ENCODE measurements at regions of chrX and their contacts with region 1.

Region 1: DNA sequence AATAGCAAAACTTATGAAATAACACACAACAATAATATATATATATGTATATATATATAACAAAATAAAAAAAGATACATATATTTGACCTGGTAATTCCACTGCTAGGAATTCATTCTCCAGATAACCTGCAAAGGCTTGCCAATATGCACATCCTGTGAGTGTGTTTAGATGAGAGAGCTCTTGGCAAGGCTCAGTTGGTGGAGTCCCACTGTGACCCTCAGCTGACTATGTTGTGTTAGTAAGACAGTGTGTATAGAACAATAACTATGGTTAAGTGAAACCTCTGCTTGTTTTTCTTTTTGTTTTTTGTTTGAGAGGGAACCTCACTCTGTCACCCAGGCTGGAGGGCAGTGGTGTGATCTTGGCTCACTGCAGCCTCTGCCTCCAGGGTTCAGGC is 39.5 kb upstream of the RBMX start:
- DNase-seq: no peak
- H3K4me3 ChIP-seq: no peak overlapping the region
- H3K27ac ChIP-seq: no peak overlapping the region
- H3K4me1 ChIP-seq: no peaks in the 10 kb centered on the region
- H3K27me3 ChIP-seq: no peaks in the 10 kb centered on the region
- CTCF ChIP-seq: no peak
- EP300 ChIP-seq: no peak
- POLR2A ChIP-seq: no peak

Region 2: DNA sequence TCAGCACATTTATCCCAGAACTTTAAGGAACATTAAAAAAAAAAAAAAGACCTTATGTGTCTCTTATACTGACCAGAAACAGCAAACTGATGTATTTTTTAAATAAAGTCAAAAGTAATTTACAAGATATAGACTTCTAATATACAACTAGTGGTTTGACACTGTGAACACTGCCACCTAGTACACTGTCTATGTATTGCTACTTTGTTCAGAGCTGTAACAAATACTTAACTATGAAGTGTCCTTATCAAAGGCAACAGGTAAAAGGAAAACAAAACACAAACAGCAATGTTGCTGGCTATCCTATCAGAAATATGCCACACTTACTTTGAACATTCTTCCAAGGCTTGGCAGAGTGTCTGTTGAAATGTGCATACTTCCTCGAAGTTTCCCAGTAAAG is 211.7 kb before region 1 on chrX:
- intact Hi-C with region 1: loop called (anchors 5 kb)
- DNase-seq: no peak
- H3K4me3 ChIP-seq: no peak overlapping the region
- H3K27ac ChIP-seq: no peak overlapping the region
- H3K4me1 ChIP-seq: no peaks in the 10 kb centered on the region
- H3K27me3 ChIP-seq: no peaks in the 10 kb centered on the region
- CTCF ChIP-seq: peak in 1 of 3 experiments; percentile 26
- EP300 ChIP-seq: no peak
- POLR2A ChIP-seq: no peak

Region 3: DNA sequence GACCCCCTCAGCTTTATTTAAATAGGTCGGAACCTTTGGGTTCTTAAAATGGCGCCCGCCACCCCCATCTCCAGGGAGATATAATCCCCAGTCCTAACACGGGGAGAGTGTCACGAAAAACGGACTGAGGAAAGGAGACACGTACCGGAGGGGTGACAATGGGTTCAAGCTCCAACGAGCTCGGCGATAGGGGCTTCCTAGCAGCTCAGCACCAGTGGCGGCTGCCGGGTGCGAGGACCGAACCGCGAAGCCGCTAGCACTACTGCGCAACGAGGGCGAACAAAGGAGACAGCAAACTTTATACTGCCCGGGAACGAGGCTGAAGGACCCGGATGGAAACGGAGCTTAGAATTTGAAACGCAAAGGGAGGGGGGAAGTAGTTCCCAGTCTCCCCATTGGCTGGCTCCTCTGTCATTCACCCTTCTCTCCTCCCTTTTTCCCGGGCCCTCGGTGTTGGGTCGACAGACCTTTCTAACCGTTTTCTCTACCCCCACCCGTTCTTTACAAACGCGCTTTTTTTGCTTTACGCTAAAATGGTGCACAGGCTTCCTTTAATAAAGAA is 39.5 kb before region 1 on chrX and contains the start of gene RBMX:
- intact Hi-C with region 1: loop called (anchors 5 kb)
- DNase-seq: peak; percentile 95
- H3K4me3 ChIP-seq: peak within 1 kb of the TSS; percentile 69 to 83 (median 76)
- H3K27ac ChIP-seq: peak within 1 kb of the TSS; percentile 87 to 95 (median 94)
- H3K4me1 ChIP-seq: peaks cover 0 to 20% (median 9%) of the 10 kb centered on the region in 4 donors
- H3K27me3 ChIP-seq: no peaks in the 10 kb centered on the region
- CTCF ChIP-seq: no peak
- EP300 ChIP-seq: no peak
- POLR2A ChIP-seq: peak; percentile 97
- total RNA-seq, gene RBMX: 126 to 219 (median 159) TPM

Measured in esophagus muscularis mucosa (tissue), 4 donors.